Activated CD4-positive, alpha-beta memory T cell treated with anti-CD3 and anti-CD28 coated beads for 36 hours (primary cell): ENCODE measurements at regions of chr5 and their contacts with region 1.

Region 1: GRCh38 chr5:43305948-43306565 is 7.2 kb downstream of the HMGCS1 start:
- DNase-seq: no peak
- H3K4me3 Mint-ChIP-seq: peak overlapping the region; percentile 2
- H3K27ac Mint-ChIP-seq: peak overlapping the region; percentile 78
- H3K4me1 Mint-ChIP-seq: peaks cover 84% of the 10 kb centered on the region
- H3K27me3 Mint-ChIP-seq: no peaks in the 10 kb centered on the region

Region 2: GRCh38 chr5:43336159-43336558 is 30.1 kb after region 1 on chr5:
- CTCF ChIA-PET with region 1: interaction called, 4 read pairs
- POLR2A ChIA-PET with region 1: no interaction called
- intact Hi-C with region 1: loop called (anchors 1 kb)
- DNase-seq: peak; percentile 44
- H3K4me3 Mint-ChIP-seq: no peak overlapping the region
- H3K27ac Mint-ChIP-seq: peak overlapping the region; percentile 54
- H3K4me1 Mint-ChIP-seq: peaks cover 15% of the 10 kb centered on the region
- H3K27me3 Mint-ChIP-seq: peaks cover 29% of the 10 kb centered on the region

Region 3: DNA sequence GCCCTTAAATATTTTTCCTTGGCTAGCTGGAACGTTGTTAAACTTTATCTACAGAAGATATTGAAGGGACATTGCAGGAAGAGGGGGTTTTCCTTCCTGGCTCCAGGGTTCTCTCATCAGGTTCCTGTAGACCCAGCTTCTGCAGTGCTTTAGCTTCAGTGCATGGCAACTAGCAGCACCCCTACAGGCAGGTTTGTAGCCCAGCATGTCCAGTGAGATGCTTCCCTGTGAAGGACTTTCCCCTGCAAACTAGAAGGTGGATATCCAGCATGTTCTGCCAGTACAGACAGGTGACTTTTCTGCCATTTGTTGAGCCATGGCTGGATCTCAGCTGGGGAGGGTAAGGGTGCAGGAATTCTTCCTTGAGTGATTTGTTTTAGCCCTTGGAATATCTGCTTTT is 95.8 kb after region 1 on chr5:
- CTCF ChIA-PET with region 1: no interaction called
- POLR2A ChIA-PET with region 1: no interaction called
- intact Hi-C with region 1: no loop called
- DNase-seq: no peak
- H3K4me3 Mint-ChIP-seq: no peak overlapping the region
- H3K27ac Mint-ChIP-seq: no peak overlapping the region
- H3K4me1 Mint-ChIP-seq: peaks cover 12% of the 10 kb centered on the region
- H3K27me3 Mint-ChIP-seq: peaks cover 1% of the 10 kb centered on the region